ENCODE measurements at regions of chr15 and their contacts with region 1.

Region 1: GRCh38 chr15:52615284-52615683 is 46.5 kb upstream of the ARPP19 start:
- DNase-seq: no peak
- ATAC-seq: no peak
- H3K4me3 Mint-ChIP-seq: no peak overlapping the region
- H3K27ac Mint-ChIP-seq: no peak overlapping the region
- H3K4me1 Mint-ChIP-seq: peaks cover 6% of the 10 kb centered on the region
- H3K27me3 Mint-ChIP-seq: no peaks in the 10 kb centered on the region
- CTCF ChIP-seq: no peak

Region 2: DNA sequence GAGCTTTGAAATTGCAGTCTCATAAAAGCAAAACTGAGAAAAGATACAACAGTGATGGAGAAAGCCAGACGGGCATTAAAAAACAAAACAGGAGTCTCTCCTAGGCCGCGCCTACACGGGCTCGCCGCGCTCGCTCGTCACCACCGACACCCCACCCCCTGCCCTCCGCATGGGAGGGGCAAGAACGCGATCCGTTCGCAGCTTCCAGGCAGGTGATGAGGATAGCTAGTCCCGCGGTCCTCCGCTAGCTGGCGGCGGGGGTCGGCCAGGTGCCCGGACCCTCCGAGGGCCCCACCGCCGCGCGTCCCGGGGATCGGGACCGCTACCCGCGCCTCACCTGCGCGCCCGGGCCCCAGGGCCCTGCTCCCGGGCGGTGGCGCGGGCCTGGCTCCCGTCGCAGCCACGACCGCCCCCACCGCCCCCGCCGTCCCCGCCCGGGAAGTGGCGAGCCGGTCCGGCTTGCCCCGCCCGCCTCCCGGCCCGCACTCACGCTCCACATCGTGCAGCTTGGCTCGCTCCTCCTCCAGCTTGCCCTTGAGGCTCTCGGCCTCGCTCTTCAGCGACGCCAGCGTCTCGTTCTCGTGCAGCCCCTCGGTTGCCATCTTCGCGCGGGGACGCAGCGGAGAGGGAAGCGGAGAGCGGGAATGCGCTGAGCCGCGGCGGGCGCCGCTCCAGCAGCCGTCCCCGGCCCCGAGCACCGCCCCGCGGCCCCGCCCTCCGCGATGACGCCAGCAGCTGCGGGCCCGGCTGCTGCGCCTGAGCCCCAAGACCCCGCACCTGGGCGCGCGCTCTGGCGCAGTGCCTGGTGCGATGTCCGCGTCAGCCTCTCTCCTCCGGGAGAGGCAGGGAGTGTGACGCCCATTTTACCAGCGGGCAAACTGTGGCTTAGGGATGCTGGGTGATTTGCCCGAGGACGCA is 435.7 kb before region 1 on chr15:
- CTCF ChIA-PET with region 1: no interaction called
- POLR2A ChIA-PET with region 1: no interaction called
- intact Hi-C with region 1: no loop called
- DNase-seq: peak; percentile 95
- ATAC-seq: peak; percentile 80
- H3K4me3 Mint-ChIP-seq: peak overlapping the region; percentile 98
- H3K27ac Mint-ChIP-seq: peak overlapping the region; percentile 99
- H3K4me1 Mint-ChIP-seq: peaks cover 58% of the 10 kb centered on the region
- H3K27me3 Mint-ChIP-seq: no peaks in the 10 kb centered on the region
- CTCF ChIP-seq: no peak

Region 3: DNA sequence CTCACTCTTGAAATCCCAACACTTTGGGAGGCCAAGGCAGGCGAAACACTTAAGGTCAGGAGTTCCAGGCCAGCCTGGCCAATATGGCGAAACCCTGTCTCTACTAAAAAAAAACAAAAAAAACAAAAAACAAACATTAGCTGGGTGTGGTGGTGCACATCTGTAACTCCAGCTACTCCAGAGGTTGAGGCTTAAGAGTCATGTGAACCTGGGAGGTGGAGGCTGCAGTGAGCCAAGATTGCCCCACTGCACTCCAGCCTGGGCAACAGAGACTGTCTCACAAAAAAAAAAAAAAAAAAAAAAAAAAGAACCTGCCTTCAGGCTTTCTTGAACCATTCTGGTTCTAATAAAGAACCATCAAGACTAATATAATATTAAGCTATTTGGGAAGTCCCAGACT is 63.0 kb before region 1 on chr15:
- CTCF ChIA-PET with region 1: no interaction called
- POLR2A ChIA-PET with region 1: interaction called, 11 read pairs
- intact Hi-C with region 1: no loop called
- DNase-seq: no peak
- ATAC-seq: no peak
- H3K4me3 Mint-ChIP-seq: no peak overlapping the region
- H3K27ac Mint-ChIP-seq: no peak overlapping the region
- H3K4me1 Mint-ChIP-seq: peaks cover 16% of the 10 kb centered on the region
- H3K27me3 Mint-ChIP-seq: no peaks in the 10 kb centered on the region
- CTCF ChIP-seq: no peak

Region 4: GRCh38 chr15:52626671-52627369 is 11.5 kb after region 1 on chr15:
- CTCF ChIA-PET with region 1: interaction called, 3 read pairs
- POLR2A ChIA-PET with region 1: no interaction called
- intact Hi-C with region 1: loop called (anchors 2 kb)
- DNase-seq: no peak
- ATAC-seq: no peak
- H3K4me3 Mint-ChIP-seq: no peak overlapping the region
- H3K27ac Mint-ChIP-seq: no peak overlapping the region
- H3K4me1 Mint-ChIP-seq: peaks cover 12% of the 10 kb centered on the region
- H3K27me3 Mint-ChIP-seq: no peaks in the 10 kb centered on the region
- CTCF ChIP-seq: no peak

Region 5: DNA sequence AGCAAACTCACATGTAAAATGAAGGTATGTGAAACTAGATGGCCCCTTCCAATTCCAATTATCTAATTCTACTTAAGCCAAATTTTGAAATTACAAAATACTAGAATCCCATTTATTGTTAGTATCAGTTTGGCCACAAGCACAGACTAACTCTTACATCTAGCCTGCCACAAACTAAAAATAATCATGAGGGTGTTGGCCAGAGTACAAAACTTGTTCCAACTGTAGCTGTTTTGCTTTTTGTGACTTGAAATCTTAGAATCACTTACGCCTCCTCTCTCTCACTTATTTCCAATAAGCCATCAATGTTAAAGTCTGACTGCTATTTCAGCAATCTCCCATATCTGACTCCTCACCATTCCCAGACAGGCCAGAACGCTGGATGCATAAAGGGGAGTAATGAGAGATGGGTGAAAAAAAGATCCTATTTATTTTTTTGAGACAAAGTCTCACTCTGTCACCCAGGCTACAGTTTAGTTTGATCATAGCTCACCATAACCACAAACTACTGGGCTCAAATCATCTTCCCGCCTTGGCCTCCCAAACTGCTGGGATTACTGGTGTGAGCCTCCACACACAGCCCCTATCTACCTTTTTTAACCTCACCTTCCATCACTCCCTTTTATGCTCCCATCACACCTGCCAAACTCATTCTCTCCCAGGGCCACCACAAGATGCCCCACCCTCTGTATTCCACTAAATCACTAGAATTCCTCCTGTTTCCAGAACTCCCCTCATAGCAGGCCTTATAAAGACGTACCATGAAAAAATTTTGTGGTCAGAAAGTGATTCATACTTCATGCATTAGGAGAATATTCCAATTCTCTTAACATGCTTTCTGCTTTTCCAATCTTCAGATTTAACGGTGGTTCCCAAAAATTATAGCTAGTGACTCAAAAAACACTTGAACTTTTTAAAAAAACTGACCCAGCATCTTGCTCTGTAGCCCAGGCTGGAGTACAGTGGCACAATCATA is 27.4 kb after region 1 on chr15:
- CTCF ChIA-PET with region 1: no interaction called
- POLR2A ChIA-PET with region 1: no interaction called
- intact Hi-C with region 1: no loop called
- DNase-seq: no peak
- ATAC-seq: no peak
- H3K4me3 Mint-ChIP-seq: no peak overlapping the region
- H3K27ac Mint-ChIP-seq: peak overlapping the region; percentile 10
- H3K4me1 Mint-ChIP-seq: peaks cover 2% of the 10 kb centered on the region
- H3K27me3 Mint-ChIP-seq: no peaks in the 10 kb centered on the region
- CTCF ChIP-seq: no peak

Region 6: GRCh38 chr15:53586799-53587198 is 971.5 kb after region 1 on chr15:
- CTCF ChIA-PET with region 1: no interaction called
- POLR2A ChIA-PET with region 1: no interaction called
- intact Hi-C with region 1: no loop called
- DNase-seq: no peak
- ATAC-seq: no peak
- H3K4me3 Mint-ChIP-seq: no peak overlapping the region
- H3K27ac Mint-ChIP-seq: no peak overlapping the region
- H3K4me1 Mint-ChIP-seq: peaks cover 2% of the 10 kb centered on the region
- H3K27me3 Mint-ChIP-seq: no peaks in the 10 kb centered on the region
- CTCF ChIP-seq: no peak

Measured in activated B cell treated with CpG ODN at 0.5 μM for 24 hours (primary cell).